PC-3 (cell line): ENCODE measurements at regions of chr10 and their contacts with region 1.

Region 1: DNA sequence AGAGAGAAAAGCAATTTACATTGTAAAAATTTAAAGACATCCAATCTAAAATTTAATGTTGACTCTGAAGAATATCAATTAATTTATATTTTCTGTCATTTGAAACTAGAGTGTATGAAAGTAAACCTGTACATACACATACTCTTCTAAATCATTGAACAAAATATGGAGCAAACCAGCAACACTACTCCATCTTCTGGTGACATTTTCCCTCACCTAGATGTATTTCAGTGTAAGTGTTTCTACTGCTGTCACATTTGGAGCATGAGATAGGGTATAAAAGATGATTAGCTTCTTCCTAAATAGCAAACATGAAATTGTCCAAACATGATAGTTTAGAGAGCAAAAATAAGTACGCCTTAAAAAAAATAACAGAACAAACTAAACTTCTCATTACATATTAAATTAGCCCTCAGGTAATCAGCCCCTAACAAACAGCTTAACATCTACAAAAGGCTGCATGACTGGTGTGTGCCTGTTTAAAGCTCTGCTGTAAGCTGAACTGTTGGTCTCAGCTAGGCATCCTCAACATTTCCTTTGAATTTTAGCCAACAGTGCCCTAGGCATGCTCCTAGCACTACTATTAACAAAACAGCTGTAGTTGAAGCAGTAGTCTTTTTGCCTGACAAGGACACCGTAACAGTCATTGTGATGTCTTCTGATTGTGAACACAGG is 189.8 kb downstream of the CTNNA3 start:
- DNase-seq: peak; percentile 50
- ATAC-seq: peak; percentile 44
- H3K4me3 ChIP-seq: no peak overlapping the region
- H3K27ac ChIP-seq: no peak overlapping the region
- H3K4me1 ChIP-seq: peaks cover 10% of the 10 kb centered on the region
- H3K27me3 ChIP-seq: no peaks in the 10 kb centered on the region
- CTCF ChIP-seq: peak; percentile 52; the same call in 1 of the 2 replicates

Region 2: DNA sequence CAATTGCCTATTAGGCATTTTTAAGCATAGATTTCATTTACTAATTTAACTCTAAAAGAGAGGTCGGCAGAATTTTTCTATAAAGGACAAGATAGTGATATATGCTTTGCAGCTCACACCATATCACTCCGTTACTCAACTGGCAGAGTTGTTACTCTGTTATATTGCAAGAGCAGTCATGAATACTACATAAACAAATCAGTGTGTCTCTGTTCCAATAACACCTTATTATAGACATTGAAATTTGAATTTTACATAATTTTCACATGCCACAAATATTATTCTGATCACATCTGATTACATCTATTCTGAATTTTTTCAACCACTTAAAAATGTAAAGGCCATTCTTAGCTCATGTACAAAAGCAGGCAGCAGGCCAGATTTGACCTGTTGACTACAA is 1434.3 kb before region 1 on chr10:
- CTCF ChIA-PET with region 1: no interaction called
- POLR2A ChIA-PET with region 1: no interaction called
- intact Hi-C with region 1: no loop called
- DNase-seq: no peak
- ATAC-seq: no peak
- H3K4me3 ChIP-seq: no peak overlapping the region
- H3K27ac ChIP-seq: no peak overlapping the region
- H3K4me1 ChIP-seq: no peaks in the 10 kb centered on the region
- H3K27me3 ChIP-seq: no peaks in the 10 kb centered on the region
- CTCF ChIP-seq: no peak

Region 3: DNA sequence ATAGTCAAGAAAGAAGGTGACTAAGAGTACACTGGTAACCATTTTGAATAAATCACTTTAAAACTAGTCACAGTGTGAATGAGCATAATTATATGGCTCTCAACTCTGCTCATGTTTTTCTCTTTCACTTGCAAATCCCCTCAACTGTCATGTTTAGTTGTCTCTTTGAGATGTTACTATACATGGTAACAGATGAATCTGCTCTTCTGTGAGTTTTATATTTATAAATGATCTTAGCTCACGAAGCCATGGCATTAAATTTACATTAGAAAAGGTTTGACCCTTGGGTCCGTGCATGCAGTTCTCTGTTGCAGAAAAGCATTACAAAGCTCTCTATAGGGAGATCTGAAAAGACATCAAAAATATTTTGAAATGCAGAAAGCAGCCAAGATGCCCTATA is 613.3 kb before region 1 on chr10:
- CTCF ChIA-PET with region 1: no interaction called
- POLR2A ChIA-PET with region 1: interaction called, 27 read pairs
- intact Hi-C with region 1: no loop called
- DNase-seq: no peak
- ATAC-seq: no peak
- H3K4me3 ChIP-seq: no peak overlapping the region
- H3K27ac ChIP-seq: no peak overlapping the region
- H3K4me1 ChIP-seq: peaks cover 14% of the 10 kb centered on the region
- H3K27me3 ChIP-seq: no peaks in the 10 kb centered on the region
- CTCF ChIP-seq: no peak

Region 4: DNA sequence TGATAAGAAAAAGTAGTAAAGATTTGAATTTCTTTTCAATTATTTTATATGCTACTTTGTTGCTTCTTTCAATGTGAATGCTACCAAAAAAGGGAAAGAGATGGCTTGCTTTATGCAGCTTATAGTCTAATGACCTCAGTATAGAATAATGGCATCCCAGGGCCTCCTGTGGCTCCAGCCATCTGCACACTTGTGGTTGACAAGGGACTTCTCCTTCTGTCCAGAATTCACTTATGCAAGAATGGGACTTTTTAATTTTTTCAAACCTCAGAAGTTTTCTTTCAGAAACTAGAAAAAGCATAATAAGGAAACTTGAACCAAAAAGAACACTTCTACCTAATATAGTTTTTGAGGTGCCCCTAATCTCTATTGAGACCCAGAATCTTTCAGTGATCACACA is 121.1 kb before region 1 on chr10:
- CTCF ChIA-PET with region 1: no interaction called
- POLR2A ChIA-PET with region 1: no interaction called
- intact Hi-C with region 1: loop called (anchors 5 kb)
- DNase-seq: no peak
- ATAC-seq: no peak
- H3K4me3 ChIP-seq: no peak overlapping the region
- H3K27ac ChIP-seq: no peak overlapping the region
- H3K4me1 ChIP-seq: no peaks in the 10 kb centered on the region
- H3K27me3 ChIP-seq: peaks cover 29% of the 10 kb centered on the region
- CTCF ChIP-seq: no peak

Region 5: GRCh38 chr10:67492317-67493019 is 13.8 kb before region 1 on chr10:
- CTCF ChIA-PET with region 1: interaction called, 10 read pairs
- POLR2A ChIA-PET with region 1: interaction called, 3 read pairs
- intact Hi-C with region 1: loop called (anchors 1 kb)
- DNase-seq: peak; percentile 88
- ATAC-seq: peak; percentile 92
- H3K4me3 ChIP-seq: peak overlapping the region; percentile 21
- H3K27ac ChIP-seq: peak overlapping the region; percentile 40
- H3K4me1 ChIP-seq: peaks cover 19% of the 10 kb centered on the region
- H3K27me3 ChIP-seq: no peaks in the 10 kb centered on the region
- CTCF ChIP-seq: no peak

Region 6: GRCh38 chr10:67549390-67549789 is 43.2 kb after region 1 on chr10:
- CTCF ChIA-PET with region 1: no interaction called
- POLR2A ChIA-PET with region 1: no interaction called
- intact Hi-C with region 1: no loop called
- DNase-seq: no peak
- ATAC-seq: no peak
- H3K4me3 ChIP-seq: no peak overlapping the region
- H3K27ac ChIP-seq: no peak overlapping the region
- H3K4me1 ChIP-seq: no peaks in the 10 kb centered on the region
- H3K27me3 ChIP-seq: peaks cover 79% of the 10 kb centered on the region
- CTCF ChIP-seq: no peak